Activated naive CD4-positive, alpha-beta T cell treated with anti-CD3 and anti-CD28 coated beads, Interleukin-2, amount 10 ng/mL, durations not matched to agents 7 days and 5 days (primary cell): ENCODE measurements at regions of chr20 and their contacts with region 1.

Region 1: GRCh38 chr20:1437235-1437904 is 29.3 kb downstream of the NSFL1C start:
- DNase-seq: peak; percentile 88
- H3K4me3 Mint-ChIP-seq: no peak overlapping the region
- H3K27ac Mint-ChIP-seq: no peak overlapping the region
- H3K4me1 Mint-ChIP-seq: peaks cover 58% of the 10 kb centered on the region
- H3K27me3 Mint-ChIP-seq: peaks cover 21% of the 10 kb centered on the region

Region 2: DNA sequence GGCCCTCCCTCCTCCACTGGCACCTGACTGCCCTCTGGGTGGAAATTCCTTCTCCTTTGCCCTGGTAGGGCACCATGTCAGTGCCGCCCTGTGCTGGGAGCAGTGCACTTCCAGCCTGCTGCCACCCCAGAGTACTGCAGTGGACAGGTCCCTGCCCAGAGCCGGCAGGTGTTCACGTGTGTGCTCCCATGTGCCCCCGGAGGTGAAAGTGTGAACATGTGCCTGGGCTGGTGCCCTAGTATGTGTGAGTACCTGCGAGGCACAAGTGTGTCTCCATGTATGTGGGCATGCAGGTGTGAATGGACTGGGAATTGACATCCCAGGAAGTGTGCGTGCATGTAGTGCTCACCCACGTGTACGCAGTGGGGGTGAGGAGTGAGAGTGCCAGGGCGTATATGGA is 137.8 kb before region 1 on chr20:
- CTCF ChIA-PET with region 1: interaction called, 10 read pairs
- DNase-seq: peak; percentile 61
- H3K4me3 Mint-ChIP-seq: no peak overlapping the region
- H3K27ac Mint-ChIP-seq: no peak overlapping the region
- H3K4me1 Mint-ChIP-seq: peaks cover 26% of the 10 kb centered on the region
- H3K27me3 Mint-ChIP-seq: no peaks in the 10 kb centered on the region

Region 3: DNA sequence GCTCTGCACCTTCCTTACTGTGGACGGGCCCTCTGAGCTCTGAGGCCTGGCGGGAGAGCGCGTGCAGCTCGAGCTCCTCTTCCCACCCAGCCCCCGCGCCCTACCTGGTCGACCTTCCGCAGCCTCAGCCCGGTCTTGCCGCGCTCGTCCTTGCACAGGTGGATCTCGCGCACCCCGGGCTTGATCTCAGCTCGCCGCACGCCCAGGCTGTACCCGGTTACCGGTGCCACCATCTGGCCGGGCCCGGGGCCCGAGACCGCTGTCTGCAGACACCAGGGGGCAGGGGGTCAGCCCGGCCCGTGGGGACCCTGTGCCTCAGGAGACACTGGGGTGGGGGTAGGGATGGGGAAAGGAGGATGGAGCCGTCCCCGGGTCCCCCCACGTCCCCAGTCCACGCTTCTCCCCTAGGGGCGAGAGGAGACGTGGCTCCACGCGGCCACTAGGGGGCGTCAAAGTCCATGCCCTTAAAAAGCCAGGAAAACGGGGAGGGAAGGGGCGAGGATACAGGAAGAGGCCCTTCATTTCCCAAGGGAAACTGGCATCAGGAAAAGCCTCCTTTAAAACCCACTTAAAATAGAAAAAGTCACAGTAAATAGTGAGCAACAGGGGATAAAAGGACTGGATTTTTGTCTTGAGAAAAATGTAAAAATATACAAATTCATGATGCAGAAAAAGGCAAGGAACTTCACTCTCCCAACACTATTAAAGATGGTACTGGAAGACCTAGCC is 124.0 kb before region 1 on chr20:
- CTCF ChIA-PET with region 1: interaction called, 41 read pairs
- DNase-seq: peak; percentile 69
- H3K4me3 Mint-ChIP-seq: no peak overlapping the region
- H3K27ac Mint-ChIP-seq: no peak overlapping the region
- H3K4me1 Mint-ChIP-seq: peaks cover 22% of the 10 kb centered on the region
- H3K27me3 Mint-ChIP-seq: peaks cover 14% of the 10 kb centered on the region

Region 4: DNA sequence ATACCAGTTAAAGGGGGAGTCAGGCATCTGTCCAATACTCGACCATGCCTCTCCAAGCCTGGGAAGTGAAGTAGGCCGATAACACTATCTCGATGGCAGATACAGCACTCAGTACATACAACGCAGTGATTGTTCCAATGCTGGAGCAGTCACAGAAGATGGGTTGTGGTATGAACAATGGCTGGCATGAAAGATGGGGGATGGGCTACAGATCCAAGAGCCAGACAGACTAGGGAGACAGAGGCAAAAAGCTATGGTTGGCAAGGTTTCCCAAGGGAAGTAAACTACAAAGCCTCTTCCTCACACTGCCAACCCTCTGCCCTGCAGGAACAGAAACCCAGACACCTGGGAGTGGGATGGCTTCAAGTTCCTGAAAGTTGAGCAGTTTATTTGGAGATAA is 63.8 kb before region 1 on chr20:
- CTCF ChIA-PET with region 1: no interaction called
- DNase-seq: no peak
- H3K4me3 Mint-ChIP-seq: no peak overlapping the region
- H3K27ac Mint-ChIP-seq: no peak overlapping the region
- H3K4me1 Mint-ChIP-seq: peaks cover 64% of the 10 kb centered on the region
- H3K27me3 Mint-ChIP-seq: no peaks in the 10 kb centered on the region

Region 5: DNA sequence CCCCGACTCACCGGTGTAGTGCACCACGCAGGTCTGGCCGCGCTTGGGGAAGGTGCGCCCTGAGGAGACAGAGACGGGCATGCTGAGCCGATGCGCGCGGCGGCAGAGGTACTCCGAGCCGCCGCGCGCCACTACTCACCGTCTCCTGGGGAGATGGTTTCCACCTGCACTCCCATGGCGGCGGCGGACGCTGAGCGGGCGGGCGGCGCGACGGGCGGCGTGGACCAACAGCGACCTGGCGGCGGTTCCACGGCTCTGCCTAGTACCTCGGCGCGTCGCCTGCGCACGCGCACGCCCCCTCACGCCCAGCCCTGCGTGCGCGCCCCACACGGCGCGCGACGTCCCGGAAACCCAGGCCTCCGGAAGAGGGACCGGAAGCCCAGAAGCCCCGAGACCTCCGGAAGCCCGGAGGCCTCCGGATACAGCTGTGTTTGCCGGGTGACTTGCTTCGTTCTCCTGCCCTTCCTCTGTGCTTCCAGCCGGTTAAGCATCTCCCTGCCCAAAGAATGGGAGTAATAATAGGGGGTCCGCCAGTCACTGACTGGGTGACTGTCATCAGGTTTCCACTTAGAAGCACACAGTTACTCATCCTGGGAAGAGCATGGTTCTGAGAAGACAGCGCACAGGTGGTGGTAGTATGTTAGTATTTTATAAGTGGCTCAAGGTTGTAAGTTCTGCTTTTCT is 44.4 kb before region 1 on chr20 and contains the start of gene FKBP1A:
- CTCF ChIA-PET with region 1: interaction called, 11 read pairs
- DNase-seq: peak; percentile 93
- H3K4me3 Mint-ChIP-seq: peak within 1 kb of the TSS; percentile 92
- H3K27ac Mint-ChIP-seq: peak within 1 kb of the TSS; percentile 92
- H3K4me1 Mint-ChIP-seq: peaks cover 70% of the 10 kb centered on the region
- H3K27me3 Mint-ChIP-seq: peaks cover 27% of the 10 kb centered on the region

Region 6: GRCh38 chr20:1450926-1451491 is 13.6 kb after region 1 on chr20:
- CTCF ChIA-PET with region 1: interaction called, 29 read pairs
- DNase-seq: no peak
- H3K4me3 Mint-ChIP-seq: no peak overlapping the region
- H3K27ac Mint-ChIP-seq: no peak overlapping the region
- H3K4me1 Mint-ChIP-seq: no peaks in the 10 kb centered on the region
- H3K27me3 Mint-ChIP-seq: no peaks in the 10 kb centered on the region

Region 7: DNA sequence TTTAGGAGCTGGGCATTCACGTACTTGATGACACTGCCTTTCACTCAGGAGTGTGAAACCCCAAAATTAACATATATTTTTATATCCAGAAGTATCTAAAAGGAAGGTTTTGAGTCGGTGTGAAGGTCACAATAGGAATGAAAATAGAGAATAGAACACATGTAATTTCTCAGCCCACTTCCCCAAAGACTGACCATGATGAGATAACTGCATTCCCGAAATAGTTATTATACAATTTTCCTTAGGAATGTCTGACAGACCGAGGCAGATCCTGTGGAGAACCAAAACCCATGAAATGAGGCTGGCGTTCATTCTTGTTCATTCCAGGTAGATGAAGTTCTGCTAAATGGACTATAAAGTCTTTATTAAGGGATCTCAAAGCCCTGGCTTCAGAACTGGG is 18.9 kb after region 1 on chr20:
- CTCF ChIA-PET with region 1: interaction called, 29 read pairs
- DNase-seq: no peak
- H3K4me3 Mint-ChIP-seq: no peak overlapping the region
- H3K27ac Mint-ChIP-seq: no peak overlapping the region
- H3K4me1 Mint-ChIP-seq: no peaks in the 10 kb centered on the region
- H3K27me3 Mint-ChIP-seq: no peaks in the 10 kb centered on the region